ENCODE measurements at regions of chr9 and their contacts with region 1.

Region 1: DNA sequence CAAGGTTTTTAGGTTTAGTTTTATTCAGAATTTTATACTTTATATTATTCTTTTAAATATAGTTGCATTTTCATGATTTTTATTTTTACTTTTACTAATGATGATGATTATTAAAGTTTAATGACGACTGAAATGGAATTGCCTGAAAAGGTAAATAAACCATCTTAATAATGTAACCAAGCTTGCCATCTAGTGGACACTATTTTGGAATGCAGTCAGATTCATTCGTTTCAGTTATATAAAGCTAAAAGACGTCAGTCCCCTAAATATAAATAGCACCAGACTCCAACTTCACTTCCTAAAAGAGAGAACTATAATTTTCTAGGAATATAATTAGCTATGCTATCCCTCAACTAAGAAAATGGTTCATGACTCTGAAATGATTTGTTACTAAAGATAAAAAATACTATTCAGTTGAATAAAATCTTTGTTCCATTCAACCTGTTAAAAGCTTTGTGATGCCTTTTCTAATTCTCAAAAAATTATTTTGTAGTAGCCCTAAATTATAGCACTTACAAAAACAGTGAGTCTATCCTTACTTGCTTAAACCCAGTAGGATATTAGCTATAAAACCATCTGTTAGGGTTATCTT is 19.9 kb downstream of the ABITRAM start:
- DNase-seq: no peak
- ATAC-seq: no peak
- H3K4me3 Mint-ChIP-seq: no peak overlapping the region
- H3K27ac Mint-ChIP-seq: no peak overlapping the region
- H3K4me1 Mint-ChIP-seq: peaks cover 2% of the 10 kb centered on the region
- H3K27me3 Mint-ChIP-seq: no peaks in the 10 kb centered on the region

Region 2: GRCh38 chr9:108468402-108468801 is 485.7 kb before region 1 on chr9:
- CTCF ChIA-PET with region 1: no interaction called
- POLR2A ChIA-PET with region 1: no interaction called
- intact Hi-C with region 1: loop called in 1 of 2 experiments (anchors 10 kb)
- DNase-seq: peak; percentile 64
- ATAC-seq: no peak
- H3K4me3 Mint-ChIP-seq: no peak overlapping the region
- H3K27ac Mint-ChIP-seq: no peak overlapping the region
- H3K4me1 Mint-ChIP-seq: no peaks in the 10 kb centered on the region
- H3K27me3 Mint-ChIP-seq: no peaks in the 10 kb centered on the region

Region 3: DNA sequence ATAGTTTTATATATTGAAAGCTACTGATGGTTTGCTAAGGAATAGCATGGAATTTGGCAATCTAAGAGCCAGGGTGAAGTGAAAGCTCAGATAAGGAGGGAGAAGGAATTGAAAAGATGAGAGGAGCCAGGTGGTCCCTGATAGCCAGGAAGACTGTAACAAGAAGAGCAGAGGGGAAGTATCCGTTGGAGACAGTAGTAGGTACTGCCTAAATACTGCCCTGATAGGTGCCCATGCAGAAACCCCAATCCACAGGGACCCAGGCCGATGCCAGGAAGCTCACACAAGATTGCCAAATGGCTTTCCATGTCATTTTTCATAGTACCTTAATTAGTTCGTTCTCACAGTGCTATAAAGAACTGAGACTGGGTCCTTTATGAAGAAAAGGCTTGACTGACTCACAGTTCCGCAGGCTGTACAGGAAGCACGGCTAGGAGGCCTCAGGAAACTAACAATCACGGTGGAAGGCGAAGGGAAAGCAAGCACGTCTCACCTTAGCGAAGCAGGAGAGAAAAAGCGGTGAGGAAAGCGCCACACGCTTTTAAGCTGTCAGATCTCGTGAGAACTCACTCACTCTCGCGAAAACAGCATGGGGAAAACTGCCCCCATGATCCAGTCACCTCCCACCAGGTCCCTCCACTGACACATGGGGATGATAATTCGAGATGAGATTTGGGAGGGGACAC is 111.3 kb before region 1 on chr9:
- CTCF ChIA-PET with region 1: no interaction called
- POLR2A ChIA-PET with region 1: no interaction called
- intact Hi-C with region 1: loop called in 1 of 2 experiments (anchors 2 kb)
- DNase-seq: peak; percentile 58
- ATAC-seq: peak; percentile 78
- H3K4me3 Mint-ChIP-seq: peak overlapping the region; percentile 60
- H3K27ac Mint-ChIP-seq: peak overlapping the region; percentile 89
- H3K4me1 Mint-ChIP-seq: peaks cover 12% of the 10 kb centered on the region
- H3K27me3 Mint-ChIP-seq: no peaks in the 10 kb centered on the region

Region 4: DNA sequence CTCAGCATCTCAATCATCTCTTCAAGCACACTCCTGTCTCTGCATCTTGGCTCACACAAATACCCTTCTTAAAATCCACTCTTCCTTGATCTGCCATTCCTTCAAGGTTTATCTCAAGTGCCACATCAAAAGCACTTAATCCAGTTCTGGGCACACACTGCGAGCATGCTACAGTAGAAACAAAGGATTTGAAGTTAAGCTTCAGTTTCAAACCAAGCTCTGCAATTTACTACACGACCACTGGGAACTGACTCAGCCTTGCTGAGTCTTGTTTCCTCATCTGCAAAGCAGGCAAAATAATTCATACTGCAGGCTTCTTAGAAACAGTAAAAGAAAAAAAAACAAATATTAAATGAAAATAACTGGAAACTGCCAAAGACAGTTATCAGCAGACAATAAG is 109.7 kb after region 1 on chr9:
- CTCF ChIA-PET with region 1: no interaction called
- POLR2A ChIA-PET with region 1: no interaction called
- intact Hi-C with region 1: no loop called
- DNase-seq: no peak
- ATAC-seq: no peak
- H3K4me3 Mint-ChIP-seq: no peak overlapping the region
- H3K27ac Mint-ChIP-seq: peak overlapping the region; percentile 2
- H3K4me1 Mint-ChIP-seq: peaks cover 2% of the 10 kb centered on the region
- H3K27me3 Mint-ChIP-seq: no peaks in the 10 kb centered on the region

Region 5: DNA sequence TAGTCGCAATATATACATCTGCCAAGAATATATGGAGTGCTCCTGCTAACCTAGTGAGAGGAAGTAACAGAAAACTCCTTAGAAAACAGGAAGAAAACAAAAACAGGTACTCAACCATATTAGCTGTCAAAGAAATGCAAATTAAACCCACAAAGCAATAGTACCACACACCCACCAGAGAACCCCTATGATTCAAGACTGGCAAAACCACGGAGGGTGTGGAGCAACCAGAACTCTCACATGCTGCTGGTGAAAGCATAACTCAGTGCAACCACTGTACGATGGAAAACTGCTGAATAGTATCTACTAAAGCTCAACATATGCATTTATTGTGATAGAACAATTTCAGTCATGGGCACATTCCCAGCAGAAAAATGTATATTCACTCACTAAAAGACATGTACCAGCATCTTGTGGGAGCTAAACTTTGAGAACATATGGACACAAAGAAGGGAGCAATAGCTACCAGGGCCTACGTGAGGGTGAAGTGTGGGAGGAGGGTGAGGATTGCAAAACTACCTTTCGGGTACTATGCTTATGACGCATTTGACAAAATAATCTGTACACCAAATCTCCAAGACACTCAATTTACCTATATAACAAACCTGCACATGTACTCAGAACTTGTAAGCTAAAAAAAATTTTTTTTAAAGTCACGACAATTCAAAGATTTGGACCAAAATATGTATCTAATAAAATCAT is 510.0 kb after region 1 on chr9:
- CTCF ChIA-PET with region 1: no interaction called
- POLR2A ChIA-PET with region 1: no interaction called
- intact Hi-C with region 1: no loop called
- DNase-seq: peak; percentile 53
- ATAC-seq: peak; percentile 86
- H3K4me3 Mint-ChIP-seq: no peak overlapping the region
- H3K27ac Mint-ChIP-seq: no peak overlapping the region
- H3K4me1 Mint-ChIP-seq: peaks cover 15% of the 10 kb centered on the region
- H3K27me3 Mint-ChIP-seq: peaks cover 25% of the 10 kb centered on the region